CD8-positive, alpha-beta T cell (primary cell): ENCODE measurements at regions of chr1 and their contacts with region 1.

Region 1: DNA sequence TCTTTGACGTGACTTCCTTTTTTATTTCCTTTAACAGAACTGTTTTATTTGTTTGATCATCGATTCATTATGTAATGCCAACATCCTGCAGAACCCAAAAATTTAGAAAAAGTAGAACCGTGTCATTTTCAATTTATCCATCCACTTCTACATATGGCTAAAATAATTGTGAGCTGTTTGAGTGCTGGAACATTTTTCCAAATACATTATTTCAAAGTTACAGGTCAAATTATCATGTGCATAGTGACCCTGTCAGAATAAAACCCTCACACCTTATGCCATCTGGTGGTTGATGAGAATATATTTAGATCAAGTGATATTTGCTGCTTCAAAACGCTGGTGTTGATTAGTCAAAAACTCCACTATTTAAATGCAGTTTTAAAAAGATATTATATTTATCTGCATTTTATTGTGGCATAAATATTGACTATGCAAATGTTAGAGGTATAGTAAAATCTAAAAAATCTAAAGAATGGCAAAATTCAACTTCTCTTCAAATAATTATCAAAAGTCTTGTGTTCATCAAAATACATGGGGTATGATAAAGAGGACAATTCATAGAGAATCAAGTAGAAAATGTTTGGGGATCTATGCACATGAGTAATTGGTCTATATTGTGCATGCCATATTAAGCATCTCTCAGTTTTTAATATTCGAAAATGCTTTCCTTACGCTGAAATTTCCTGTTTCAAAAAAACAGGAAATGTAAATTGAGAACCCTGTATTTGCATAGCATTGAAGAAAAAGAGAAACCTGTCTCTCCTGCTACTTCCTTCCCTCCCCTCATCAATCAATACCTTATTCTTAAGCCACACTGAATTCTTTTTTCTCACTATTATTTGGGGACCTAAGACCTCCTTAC is 39.7 kb downstream of the UBE2U start:
- DNase-seq: peak in 2 of 9 experiments; percentile 16 to 40
- ATAC-seq: no peak
- H3K4me3 ChIP-seq: no peak overlapping the region
- H3K4me3 Mint-ChIP-seq: peak overlapping the region; percentile 68
- H3K27ac ChIP-seq: no peak overlapping the region
- H3K27ac Mint-ChIP-seq: peak overlapping the region; percentile 47
- H3K4me1 ChIP-seq: peaks cover 13% of the 10 kb centered on the region
- H3K4me1 Mint-ChIP-seq: peaks cover 21% of the 10 kb centered on the region
- H3K27me3 ChIP-seq: peaks cover 0 to 4% of the 10 kb centered on the region in 2 experiments
- H3K27me3 Mint-ChIP-seq: peaks cover 12% of the 10 kb centered on the region
- CTCF ChIP-seq: peak; percentile 55

Region 2: GRCh38 chr1:63557365-63557987 is 685.6 kb before region 1 on chr1:
- CTCF ChIA-PET with region 1: interaction called, 4 read pairs
- POLR2A ChIA-PET with region 1: no interaction called
- intact Hi-C with region 1: loop called in 1 of 2 experiments (anchors 1 kb)
- DNase-seq: peak in 3 of 9 experiments; percentile 9 to 19 (median 11)
- ATAC-seq: no peak
- H3K4me3 ChIP-seq: no peak overlapping the region
- H3K4me3 Mint-ChIP-seq: no peak overlapping the region
- H3K27ac ChIP-seq: no peak overlapping the region
- H3K27ac Mint-ChIP-seq: no peak overlapping the region
- H3K4me1 ChIP-seq: no peaks in the 10 kb centered on the region
- H3K4me1 Mint-ChIP-seq: no peaks in the 10 kb centered on the region
- H3K27me3 ChIP-seq: no peaks in the 10 kb centered on the region
- H3K27me3 Mint-ChIP-seq: no peaks in the 10 kb centered on the region
- CTCF ChIP-seq: no peak

Region 3: GRCh38 chr1:63615768-63616420 is 627.2 kb before region 1 on chr1:
- CTCF ChIA-PET with region 1: interaction called, 15 read pairs
- POLR2A ChIA-PET with region 1: no interaction called
- intact Hi-C with region 1: loop called (anchors 1 kb)
- DNase-seq: peak in 7 of 9 experiments; percentile 40 to 76 (median 68)
- ATAC-seq: peak; percentile 75
- H3K4me3 ChIP-seq: no peak overlapping the region
- H3K4me3 Mint-ChIP-seq: no peak overlapping the region
- H3K27ac ChIP-seq: no peak overlapping the region
- H3K27ac Mint-ChIP-seq: no peak overlapping the region
- H3K4me1 ChIP-seq: no peaks in the 10 kb centered on the region
- H3K4me1 Mint-ChIP-seq: peaks cover 4% of the 10 kb centered on the region
- H3K27me3 ChIP-seq: no peaks in the 10 kb centered on the region
- H3K27me3 Mint-ChIP-seq: no peaks in the 10 kb centered on the region
- CTCF ChIP-seq: peak; percentile 77

Region 4: DNA sequence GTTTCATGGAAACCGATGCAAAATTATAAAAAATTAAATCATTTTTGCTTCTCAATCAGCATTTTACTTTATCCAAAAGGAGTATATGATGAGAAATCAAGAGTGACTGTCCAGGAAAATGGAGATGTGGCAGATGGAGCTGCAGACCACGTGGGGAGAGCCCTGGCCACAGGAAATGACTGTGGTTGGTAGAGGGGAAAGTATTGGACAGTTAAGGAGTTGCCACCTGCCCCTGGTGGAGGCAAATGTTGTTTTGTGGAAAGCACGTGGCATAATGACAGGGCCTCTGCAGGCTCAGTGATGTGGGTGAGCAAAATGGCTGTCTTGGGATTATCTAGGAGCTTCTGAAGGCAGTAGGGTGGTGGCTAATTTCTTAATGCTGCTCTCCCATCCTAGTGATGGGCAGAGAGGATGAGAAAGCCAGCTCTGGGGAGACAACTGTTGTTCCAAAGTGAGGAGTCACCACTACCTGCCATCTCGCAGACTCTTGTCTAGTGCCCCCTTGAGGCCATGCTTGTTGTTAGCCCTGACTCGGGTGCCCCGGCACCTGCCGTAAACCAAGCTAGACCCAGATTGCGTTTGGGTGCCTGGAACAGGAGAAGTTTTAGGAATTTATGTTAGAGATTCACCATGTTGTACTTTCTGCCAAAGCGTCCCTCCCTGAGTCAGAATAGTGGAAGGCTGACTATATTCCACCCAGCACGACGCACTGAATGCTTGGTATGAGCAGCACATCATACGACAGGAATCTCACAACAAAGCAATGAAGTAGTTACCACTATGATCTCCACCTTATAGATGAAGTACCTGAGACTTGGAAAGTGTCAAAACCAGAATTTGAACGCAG is 325.3 kb before region 1 on chr1:
- CTCF ChIA-PET with region 1: interaction called, 3 read pairs
- POLR2A ChIA-PET with region 1: no interaction called
- intact Hi-C with region 1: loop called in 1 of 2 experiments (anchors 10 kb)
- DNase-seq: peak in 1 of 9 experiments; percentile 4
- ATAC-seq: no peak
- H3K4me3 ChIP-seq: no peak overlapping the region
- H3K4me3 Mint-ChIP-seq: no peak overlapping the region
- H3K27ac ChIP-seq: no peak overlapping the region
- H3K27ac Mint-ChIP-seq: no peak overlapping the region
- H3K4me1 ChIP-seq: no peaks in the 10 kb centered on the region
- H3K4me1 Mint-ChIP-seq: no peaks in the 10 kb centered on the region
- H3K27me3 ChIP-seq: no peaks in the 10 kb centered on the region
- H3K27me3 Mint-ChIP-seq: no peaks in the 10 kb centered on the region
- CTCF ChIP-seq: no peak